Pancreas (tissue), 10 donors: ENCODE measurements at regions of chr15 and their contacts with region 1.

Region 1: DNA sequence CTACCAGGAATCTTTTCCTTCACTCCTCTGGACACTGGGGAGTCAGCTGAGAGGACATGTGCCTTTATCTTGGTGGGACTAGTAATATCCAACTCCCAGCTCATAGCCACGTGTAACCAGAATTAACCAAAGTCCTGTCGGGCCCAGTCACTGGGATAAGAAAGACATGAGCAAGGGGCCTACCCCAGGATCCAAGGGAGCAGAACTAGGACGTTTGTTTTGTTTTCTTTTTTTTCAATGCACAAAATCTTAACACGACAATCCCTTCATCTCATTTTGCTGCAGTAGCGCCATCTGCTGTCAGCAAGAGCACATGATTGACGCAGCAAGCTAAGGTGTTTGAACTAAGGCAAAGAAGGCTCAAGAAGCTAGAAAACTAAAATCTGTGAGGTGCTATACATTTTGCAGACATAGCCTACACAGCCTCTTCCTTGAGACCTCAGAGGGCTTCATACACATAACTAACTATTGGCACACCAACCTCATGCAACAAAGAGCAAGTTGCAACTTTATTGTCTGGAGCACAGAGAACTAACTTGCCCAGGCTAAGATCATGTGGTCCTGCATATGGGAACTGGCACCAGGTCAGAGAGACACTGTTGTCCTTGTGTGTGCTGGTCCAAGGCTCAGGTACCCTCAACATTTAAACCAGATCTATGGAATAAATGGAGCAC is 43.6 kb downstream of the RLBP1 start:
- DNase-seq: peak in 2 of 6 donors; percentile 37 to 65
- ATAC-seq: peak; percentile 44 to 75 (median 72)
- H3K4me3 ChIP-seq: no peak overlapping the region
- H3K27ac ChIP-seq: no peak overlapping the region
- H3K4me1 ChIP-seq: no peaks in the 10 kb centered on the region
- H3K27me3 ChIP-seq: no peaks in the 10 kb centered on the region
- CTCF ChIP-seq: peak; percentile 54 to 72 (median 66)

Region 2: DNA sequence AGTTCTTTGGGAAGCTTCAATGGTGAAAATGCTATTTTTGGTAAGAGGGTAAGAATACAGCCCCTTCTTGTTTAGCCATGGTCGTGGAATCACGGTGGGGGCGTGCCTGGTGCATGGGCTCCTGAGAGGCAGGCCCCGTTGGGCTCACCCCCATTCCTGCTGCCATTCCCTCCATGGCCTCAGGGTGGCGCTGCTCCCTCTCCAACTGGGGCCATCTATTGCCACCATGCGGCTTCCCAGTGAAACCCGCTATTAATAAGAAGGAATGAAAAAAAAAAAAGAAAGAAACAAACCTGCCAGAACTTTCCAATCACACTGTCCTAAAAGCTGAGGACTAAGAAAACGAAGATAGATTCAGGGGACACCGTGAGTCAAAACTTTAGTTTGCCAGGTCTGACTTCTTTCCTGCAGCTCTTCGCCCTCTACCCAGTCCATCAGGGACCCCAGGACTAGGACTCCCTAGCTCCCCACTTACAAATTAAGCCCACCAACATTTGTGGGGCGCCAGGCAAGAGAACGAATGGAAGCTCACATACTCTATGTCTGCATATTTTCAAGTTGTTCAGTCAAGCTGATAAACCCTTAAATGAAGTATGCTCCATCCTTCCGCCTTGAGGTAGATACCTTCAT is 120.2 kb before region 1 on chr15:
- intact Hi-C with region 1: loop called in 2 of 3 experiments (anchors 5 kb)
- DNase-seq: peak; percentile 59 to 97 (median 86)
- ATAC-seq: peak; percentile 80 to 99 (median 97)
- H3K4me3 ChIP-seq: no peak overlapping the region
- H3K27ac ChIP-seq: no peak overlapping the region
- H3K4me1 ChIP-seq: no peaks in the 10 kb centered on the region
- H3K27me3 ChIP-seq: no peaks in the 10 kb centered on the region
- CTCF ChIP-seq: peak; percentile 95 to 98 (median 97)

Region 3: DNA sequence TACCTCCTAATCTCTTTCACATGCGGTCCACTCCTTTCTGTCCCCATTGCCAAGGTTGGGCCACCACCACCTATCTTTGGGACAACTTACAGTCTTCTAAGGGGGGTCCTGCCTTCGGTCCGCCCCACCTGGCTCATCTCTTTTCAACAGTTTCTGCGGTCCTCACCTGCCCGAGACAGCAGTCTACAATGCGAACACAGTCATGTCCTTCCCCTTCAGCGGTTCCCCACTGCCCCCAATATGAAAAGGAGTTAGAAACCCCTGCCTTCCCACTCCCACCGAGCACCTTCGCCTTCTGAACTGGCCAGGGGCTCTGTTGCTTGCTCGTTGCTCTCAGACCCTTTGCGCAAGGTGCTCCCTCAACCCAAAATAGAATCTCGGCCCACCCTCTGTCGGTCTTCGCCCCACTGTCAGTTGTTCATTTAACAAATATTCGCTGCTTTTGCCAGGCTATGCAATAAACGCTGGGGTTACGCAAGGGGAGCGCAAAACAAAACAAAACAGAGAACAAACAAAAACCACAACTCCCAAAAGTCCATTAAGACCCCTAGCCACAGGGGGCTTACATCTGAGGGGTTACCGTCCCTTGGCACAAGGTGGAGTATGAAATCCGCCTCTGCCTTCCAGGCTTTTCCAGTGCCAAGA is 65.4 kb after region 1 on chr15:
- intact Hi-C with region 1: no loop called
- DNase-seq: peak in 1 of 6 donors; percentile 7
- ATAC-seq: peak; percentile 6 to 20 (median 15)
- H3K4me3 ChIP-seq: peak overlapping the region; percentile 55 to 87 (median 58)
- H3K27ac ChIP-seq: peak overlapping the region in 1 of 4 donors; percentile 39
- H3K4me1 ChIP-seq: no peaks in the 10 kb centered on the region
- H3K27me3 ChIP-seq: no peaks in the 10 kb centered on the region
- CTCF ChIP-seq: no peak